Activated CD4-positive, alpha-beta memory T cell treated with anti-CD3 and anti-CD28 coated beads for 36 hours (primary cell): ENCODE measurements at regions of chr16 and their contacts with region 1.

Region 1: GRCh38 chr16:89560378-89561141 is at the start of gene RPL13:
- DNase-seq: peak; percentile 96
- H3K4me3 Mint-ChIP-seq: peak within 1 kb of the TSS; percentile 93
- H3K27ac Mint-ChIP-seq: peak within 1 kb of the TSS; percentile 91
- H3K4me1 Mint-ChIP-seq: peaks cover 49% of the 10 kb centered on the region
- H3K27me3 Mint-ChIP-seq: no peaks in the 10 kb centered on the region
- total RNA-seq, gene RPL13: 3,430 to 3,468 TPM

Region 2: DNA sequence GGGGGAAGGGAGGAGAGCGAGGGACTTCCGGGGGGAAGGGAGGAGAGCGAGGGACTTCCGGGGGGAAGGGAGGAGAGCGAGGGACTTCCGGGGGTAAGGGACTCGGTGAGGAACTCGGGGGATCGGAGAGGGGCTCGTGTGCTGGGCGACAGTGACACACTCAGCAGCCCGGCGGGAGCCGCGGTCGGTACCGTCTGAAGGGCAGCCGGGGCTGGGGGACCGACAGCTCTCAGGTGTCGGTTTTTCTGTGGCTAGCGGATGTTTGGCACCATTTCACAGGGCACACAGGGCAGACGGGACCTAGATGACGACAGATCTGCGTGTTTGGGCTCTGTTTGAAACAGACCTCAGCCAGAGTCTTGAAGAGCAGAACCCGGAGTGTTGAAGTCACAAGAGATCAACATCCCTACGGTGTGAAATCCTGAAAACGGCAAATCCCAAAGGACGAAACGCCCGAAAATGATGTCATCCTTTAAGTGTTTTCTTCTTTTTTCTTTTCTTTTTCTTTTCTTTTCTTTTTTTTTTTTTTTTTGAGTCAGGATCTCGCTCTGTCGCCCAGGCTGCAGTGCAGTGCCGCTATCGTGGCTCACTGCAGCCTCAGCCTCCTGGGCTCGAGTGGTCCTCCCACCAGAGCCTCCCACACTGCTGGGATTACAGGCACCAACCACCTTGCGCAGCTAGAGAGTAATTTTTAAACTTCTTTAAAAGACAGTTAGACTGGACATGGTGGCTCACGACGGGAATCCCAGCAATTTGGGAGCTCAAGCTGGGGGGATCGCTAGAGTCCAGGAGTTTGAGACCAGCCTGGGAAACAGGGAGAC is 319.2 kb before region 1 on chr16:
- CTCF ChIA-PET with region 1: interaction called, 4 read pairs
- POLR2A ChIA-PET with region 1: no interaction called
- intact Hi-C with region 1: loop called (anchors 2 kb)
- DNase-seq: peak; percentile 86
- H3K4me3 Mint-ChIP-seq: peak overlapping the region; percentile 97
- H3K27ac Mint-ChIP-seq: peak overlapping the region; percentile 96
- H3K4me1 Mint-ChIP-seq: peaks cover 4% of the 10 kb centered on the region
- H3K27me3 Mint-ChIP-seq: no peaks in the 10 kb centered on the region

Region 3: GRCh38 chr16:89325861-89326471 is 234.6 kb before region 1 on chr16:
- CTCF ChIA-PET with region 1: interaction called, 5 read pairs
- POLR2A ChIA-PET with region 1: no interaction called
- intact Hi-C with region 1: loop called (anchors 5 kb)
- DNase-seq: peak; percentile 48
- H3K4me3 Mint-ChIP-seq: no peak overlapping the region
- H3K27ac Mint-ChIP-seq: peak overlapping the region; percentile 46
- H3K4me1 Mint-ChIP-seq: peaks cover 87% of the 10 kb centered on the region
- H3K27me3 Mint-ChIP-seq: no peaks in the 10 kb centered on the region

Region 4: GRCh38 chr16:89442990-89443731 is 117.4 kb before region 1 on chr16:
- CTCF ChIA-PET with region 1: no interaction called
- POLR2A ChIA-PET with region 1: no interaction called
- intact Hi-C with region 1: no loop called
- DNase-seq: no peak
- H3K4me3 Mint-ChIP-seq: no peak overlapping the region
- H3K27ac Mint-ChIP-seq: peak overlapping the region; percentile 10
- H3K4me1 Mint-ChIP-seq: peaks cover 93% of the 10 kb centered on the region
- H3K27me3 Mint-ChIP-seq: no peaks in the 10 kb centered on the region

Region 5: GRCh38 chr16:89549007-89549700 is 11.4 kb before region 1 on chr16:
- CTCF ChIA-PET with region 1: interaction called, 12 read pairs
- POLR2A ChIA-PET with region 1: interaction called, 5 read pairs
- intact Hi-C with region 1: no loop called
- DNase-seq: peak; percentile 18
- H3K4me3 Mint-ChIP-seq: no peak overlapping the region
- H3K27ac Mint-ChIP-seq: peak overlapping the region; percentile 61
- H3K4me1 Mint-ChIP-seq: peaks cover 15% of the 10 kb centered on the region
- H3K27me3 Mint-ChIP-seq: no peaks in the 10 kb centered on the region

Region 6: GRCh38 chr16:89686520-89687091 is 126.0 kb after region 1 on chr16 and contains the start of gene CDK10:
- CTCF ChIA-PET with region 1: no interaction called
- POLR2A ChIA-PET with region 1: no interaction called
- intact Hi-C with region 1: loop called (anchors 1 kb)
- DNase-seq: peak; percentile 94
- H3K4me3 Mint-ChIP-seq: peak within 1 kb of the TSS; percentile 92
- H3K27ac Mint-ChIP-seq: peak within 1 kb of the TSS; percentile 90
- H3K4me1 Mint-ChIP-seq: peaks cover 15% of the 10 kb centered on the region
- H3K27me3 Mint-ChIP-seq: no peaks in the 10 kb centered on the region
- total RNA-seq, gene CDK10: 90.0 to 92.4 TPM